ENCODE measurements at regions of chr17 and their contacts with region 1.

Region 1: DNA sequence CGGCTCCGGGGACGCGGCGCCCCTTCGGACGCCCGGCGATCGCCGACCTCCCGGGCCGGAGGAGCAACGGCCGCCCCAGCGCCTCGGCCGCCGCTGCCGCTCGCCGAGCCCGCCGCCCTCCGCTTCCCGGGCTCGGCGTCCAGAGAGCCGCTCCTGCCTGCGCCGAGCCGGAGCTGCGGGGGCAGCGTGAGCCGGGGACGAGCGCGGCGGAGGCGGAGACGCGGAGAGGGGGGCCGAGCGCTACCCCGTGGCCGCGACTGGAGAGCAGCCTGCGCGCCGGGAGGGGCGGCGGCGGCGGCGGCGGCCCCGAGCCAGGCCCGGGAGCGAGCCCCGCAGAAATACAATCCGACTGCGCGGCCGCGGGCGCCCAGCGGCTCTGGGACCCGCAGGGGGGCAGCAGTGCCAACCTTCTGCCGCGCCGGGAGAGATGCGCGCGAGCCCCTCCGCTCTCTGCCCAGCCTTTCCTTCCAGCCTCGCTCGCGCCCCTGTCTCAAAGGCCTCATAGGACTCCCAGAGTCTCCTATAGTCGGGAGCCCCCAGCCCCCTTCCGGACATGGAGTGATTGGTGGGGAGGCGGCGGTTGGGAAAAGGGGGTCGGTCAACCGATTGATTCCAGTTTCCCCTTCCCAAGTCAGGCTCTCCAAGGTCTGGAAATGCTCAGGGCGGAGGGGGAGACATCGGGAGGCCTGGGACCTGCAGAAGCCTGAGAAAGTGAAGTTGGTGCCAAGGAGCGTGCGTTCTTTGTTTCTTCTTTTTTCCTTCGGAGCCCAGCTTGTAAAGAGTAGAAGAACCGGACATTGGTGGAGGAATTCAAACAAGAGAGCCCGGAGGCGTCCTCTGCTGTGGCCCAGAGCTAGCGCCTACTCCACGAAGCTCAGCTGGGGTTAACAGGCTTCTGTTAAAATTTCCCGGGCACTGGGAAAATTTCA is 1.1 kb upstream of the SDK2 start:
- DNase-seq: no peak
- H3K4me3 ChIP-seq: peak overlapping the region; percentile 67 to 87 (median 80)
- H3K27ac ChIP-seq: no peak overlapping the region
- H3K4me1 ChIP-seq: peaks cover 4 to 19% (median 12%) of the 10 kb centered on the region in 4 experiments
- H3K27me3 ChIP-seq: peaks cover 5 to 47% (median 37%) of the 10 kb centered on the region in 4 experiments
- CTCF ChIP-seq: peak in 1 of 3 experiments; percentile 35; a peak in 2 of 4 replicates
- EP300 ChIP-seq: peak in 1 of 2 experiments; percentile 72; a peak in 1 of 3 replicates
- POLR2A ChIP-seq: no peak
- RAD21 ChIP-seq: peak in 1 of 2 experiments; percentile 3; a peak in 3 of 4 replicates

Region 2: DNA sequence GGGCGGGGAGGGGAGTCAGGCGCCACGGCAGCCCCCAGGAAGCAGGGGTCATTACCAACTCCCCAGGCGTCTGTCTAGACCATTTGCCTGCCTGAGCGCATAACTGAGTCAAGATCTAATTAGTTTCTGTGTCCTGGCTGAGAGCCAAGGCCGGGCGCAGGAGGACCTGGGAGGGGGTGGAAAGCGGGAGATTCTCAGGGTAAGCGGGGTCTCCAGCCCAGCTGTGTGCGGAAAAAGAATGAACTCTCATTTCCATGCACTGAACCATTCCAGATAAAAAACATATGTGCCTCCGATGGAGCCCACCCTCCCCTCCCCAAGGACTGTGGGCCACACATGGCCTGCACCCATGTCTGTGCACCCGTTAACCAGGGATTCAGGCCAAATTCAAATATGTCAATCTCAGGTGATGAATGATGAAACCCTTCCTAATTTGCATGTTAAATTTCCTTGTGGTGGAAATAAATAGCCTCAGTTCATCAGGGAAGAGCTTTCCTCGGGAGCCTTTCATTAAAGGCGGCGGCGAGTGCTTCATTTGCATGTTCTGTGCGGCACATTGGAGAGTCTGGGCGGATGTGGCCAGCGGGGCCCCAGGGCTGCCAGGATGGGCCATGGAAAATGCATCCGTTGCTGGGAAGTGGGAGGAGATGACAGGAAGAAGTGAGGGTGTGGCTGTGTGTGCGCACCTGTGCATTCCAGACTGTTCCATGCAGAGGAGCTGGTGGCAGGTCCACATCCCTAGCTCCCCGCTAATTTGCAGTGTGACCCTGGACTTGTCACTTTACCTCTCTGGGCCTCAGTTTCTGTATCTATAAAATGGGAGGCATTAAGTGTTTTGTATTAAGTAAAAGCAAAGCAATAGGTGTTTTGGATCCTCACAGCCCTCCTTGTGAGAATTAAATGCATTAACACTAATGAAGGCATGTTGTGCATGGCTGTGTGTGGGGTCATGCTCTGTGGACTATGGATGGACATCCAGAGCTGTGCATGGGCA is 152.2 kb before region 1 on chr17:
- CTCF ChIA-PET with region 1: interaction called, 10 read pairs
- POLR2A ChIA-PET with region 1: interaction called, 3 read pairs
- DNase-seq: no peak
- H3K4me3 ChIP-seq: no peak overlapping the region
- H3K27ac ChIP-seq: no peak overlapping the region
- H3K4me1 ChIP-seq: peaks cover 2 to 18% (median 9%) of the 10 kb centered on the region in 4 experiments
- H3K27me3 ChIP-seq: no peaks in the 10 kb centered on the region; a peak in 1 of 7 replicates
- CTCF ChIP-seq: no peak
- EP300 ChIP-seq: no peak
- POLR2A ChIP-seq: no peak
- RAD21 ChIP-seq: no peak

Region 3: GRCh38 chr17:73628642-73629552 is 16.4 kb before region 1 on chr17:
- CTCF ChIA-PET with region 1: interaction called, 67 read pairs
- POLR2A ChIA-PET with region 1: no interaction called
- DNase-seq: no peak
- H3K4me3 ChIP-seq: no peak overlapping the region
- H3K27ac ChIP-seq: no peak overlapping the region
- H3K4me1 ChIP-seq: peaks cover 0 to 21% (median 5%) of the 10 kb centered on the region in 4 experiments; a peak in 6 of 7 replicates
- H3K27me3 ChIP-seq: no peaks in the 10 kb centered on the region
- CTCF ChIP-seq: no peak
- EP300 ChIP-seq: no peak
- POLR2A ChIP-seq: no peak
- RAD21 ChIP-seq: no peak

Region 4: GRCh38 chr17:73690676-73691075 is 45.4 kb after region 1 on chr17:
- CTCF ChIA-PET with region 1: interaction called, 10 read pairs
- POLR2A ChIA-PET with region 1: no interaction called
- DNase-seq: peak in 1 of 2 experiments; percentile 47
- H3K4me3 ChIP-seq: no peak overlapping the region
- H3K27ac ChIP-seq: no peak overlapping the region
- H3K4me1 ChIP-seq: peaks cover 2 to 17% (median 8%) of the 10 kb centered on the region in 4 experiments; a peak in 5 of 7 replicates
- H3K27me3 ChIP-seq: no peaks in the 10 kb centered on the region; a peak in 1 of 7 replicates
- CTCF ChIP-seq: no peak
- EP300 ChIP-seq: no peak
- POLR2A ChIP-seq: no peak
- RAD21 ChIP-seq: no peak

Region 5: GRCh38 chr17:73719588-73720071 is 74.3 kb after region 1 on chr17:
- CTCF ChIA-PET with region 1: interaction called, 175 read pairs
- POLR2A ChIA-PET with region 1: no interaction called
- DNase-seq: no peak
- H3K4me3 ChIP-seq: no peak overlapping the region
- H3K27ac ChIP-seq: no peak overlapping the region
- H3K4me1 ChIP-seq: peaks cover 0 to 7% (median 2%) of the 10 kb centered on the region in 4 experiments; a peak in 5 of 7 replicates
- H3K27me3 ChIP-seq: peaks cover 0 to 2% (median 0%) of the 10 kb centered on the region in 4 experiments; a peak in 2 of 7 replicates
- CTCF ChIP-seq: no peak
- EP300 ChIP-seq: no peak
- POLR2A ChIP-seq: no peak
- RAD21 ChIP-seq: no peak

Region 6: GRCh38 chr17:73740370-73740769 is 95.1 kb after region 1 on chr17:
- CTCF ChIA-PET with region 1: no interaction called
- POLR2A ChIA-PET with region 1: no interaction called
- DNase-seq: no peak
- H3K4me3 ChIP-seq: no peak overlapping the region
- H3K27ac ChIP-seq: no peak overlapping the region
- H3K4me1 ChIP-seq: peaks cover 0 to 11% (median 4%) of the 10 kb centered on the region in 4 experiments; a peak in 4 of 7 replicates
- H3K27me3 ChIP-seq: no peaks in the 10 kb centered on the region
- CTCF ChIP-seq: no peak
- EP300 ChIP-seq: no peak
- POLR2A ChIP-seq: no peak
- RAD21 ChIP-seq: no peak

Region 7: GRCh38 chr17:73998653-73999645 is 353.6 kb after region 1 on chr17:
- CTCF ChIA-PET with region 1: interaction called, 11 read pairs
- POLR2A ChIA-PET with region 1: no interaction called
- DNase-seq: peak; percentile 39 to 91
- H3K4me3 ChIP-seq: no peak overlapping the region
- H3K27ac ChIP-seq: no peak overlapping the region
- H3K4me1 ChIP-seq: peaks cover 0 to 3% (median 0%) of the 10 kb centered on the region in 4 experiments; a peak in 2 of 7 replicates
- H3K27me3 ChIP-seq: no peaks in the 10 kb centered on the region
- CTCF ChIP-seq: peak; percentile 86 to 99 (median 95)
- EP300 ChIP-seq: no peak
- POLR2A ChIP-seq: no peak
- RAD21 ChIP-seq: peak; percentile 78 to 81

Measured in H1 (cell line).